ENCODE measurements at regions of chr5 and their contacts with region 1.

Region 1: DNA sequence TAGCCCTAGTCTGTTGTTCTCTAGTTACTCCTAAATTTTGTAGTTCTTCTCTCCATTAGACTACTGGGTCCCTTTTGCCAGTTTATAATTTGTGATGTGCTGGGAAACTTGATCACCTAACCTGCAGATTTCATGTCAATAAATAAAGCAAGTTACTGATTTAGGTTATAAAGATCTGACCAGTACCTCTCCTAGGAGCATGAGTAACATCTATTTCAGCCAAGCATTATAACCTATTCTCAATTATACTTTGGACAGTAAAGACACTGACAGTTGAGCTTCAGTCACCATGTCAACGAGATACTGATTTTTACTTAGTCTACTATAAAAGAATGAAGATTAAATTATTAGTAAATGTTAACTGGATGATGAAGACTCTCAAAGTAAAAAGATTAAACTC is 36.7 kb downstream of the CSNK1A1 start:
- DNase-seq: no peak
- CTCF ChIP-seq: no peak

Region 2: GRCh38 chr5:149526845-149527580 is 12.5 kb after region 1 on chr5:
- CTCF ChIA-PET with region 1: interaction called, 12 read pairs
- POLR2A ChIA-PET with region 1: interaction called, 4 read pairs
- DNase-seq: no peak
- CTCF ChIP-seq: no peak